CD14-positive monocyte (primary cell): ENCODE measurements at regions of chr9 and their contacts with region 1.

Region 1: DNA sequence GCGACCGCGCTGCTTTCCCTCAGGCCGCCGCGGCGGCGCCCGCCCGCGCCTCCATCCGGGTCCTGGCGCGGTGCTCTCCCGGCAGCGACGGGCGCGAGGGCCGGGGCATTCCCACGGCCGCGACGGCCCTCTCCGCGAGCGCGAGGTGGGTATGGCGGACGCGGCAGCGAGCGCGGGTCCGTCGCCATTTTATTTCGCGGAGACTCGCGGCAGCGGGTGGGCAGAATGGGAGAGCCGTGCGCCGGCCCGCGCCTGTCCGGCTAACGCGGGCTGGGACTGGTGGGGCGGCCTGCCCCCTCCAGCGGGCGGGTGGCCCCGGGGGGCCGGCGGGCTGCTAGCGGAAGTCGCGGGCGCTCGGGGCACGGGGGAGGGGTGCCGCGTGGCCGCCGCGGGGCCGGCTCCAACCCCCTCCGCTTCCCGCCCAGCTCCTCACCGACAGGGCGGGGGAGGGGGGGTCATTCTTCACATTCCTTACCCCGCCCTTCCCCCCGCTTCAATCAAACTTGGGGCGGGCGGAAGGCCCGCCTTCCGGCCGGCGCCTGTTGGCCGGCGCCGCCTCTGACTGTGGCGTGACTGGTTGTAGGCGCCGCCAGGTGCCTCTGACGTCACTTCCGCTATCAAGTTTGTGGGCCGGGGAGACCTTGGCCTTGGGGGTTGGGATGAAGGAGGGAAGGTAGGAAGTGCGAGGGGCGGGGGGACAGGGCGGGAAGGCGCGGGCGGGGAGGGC is 82.1 kb downstream of the PTPDC1 start:
- DNase-seq: peak; percentile 97
- H3K4me3 ChIP-seq: peak overlapping the region; percentile 88 to 99 (median 93)
- H3K4me3 Mint-ChIP-seq: peak overlapping the region; percentile 84 to 90
- H3K27ac ChIP-seq: peak overlapping the region; percentile 96 to 97
- H3K27ac Mint-ChIP-seq: peak overlapping the region; percentile 93 to 97 (median 95)
- H3K4me1 ChIP-seq: peaks cover 24 to 40% of the 10 kb centered on the region in 2 donors
- H3K4me1 Mint-ChIP-seq: peaks cover 39% of the 10 kb centered on the region
- H3K27me3 ChIP-seq: no peaks in the 10 kb centered on the region
- H3K27me3 Mint-ChIP-seq: peaks cover 0 to 3% (median 0%) of the 10 kb centered on the region in 3 donors
- CTCF ChIP-seq: no peak

Region 2: GRCh38 chr9:93119953-93120845 is 1046.2 kb before region 1 on chr9:
- intact Hi-C with region 1: loop called in 1 of 2 experiments (anchors 10 kb)
- DNase-seq: peak; percentile 99
- H3K4me3 ChIP-seq: peak overlapping the region in 1 of 3 experiments; percentile 49
- H3K4me3 Mint-ChIP-seq: peak overlapping the region; percentile 52 to 81
- H3K27ac ChIP-seq: peak overlapping the region; percentile 90 to 99
- H3K27ac Mint-ChIP-seq: peak overlapping the region; percentile 99 to 100 (median 100)
- H3K4me1 ChIP-seq: peaks cover 68 to 83% of the 10 kb centered on the region in 2 donors
- H3K4me1 Mint-ChIP-seq: peaks cover 65% of the 10 kb centered on the region
- H3K27me3 ChIP-seq: no peaks in the 10 kb centered on the region
- H3K27me3 Mint-ChIP-seq: peaks cover 0 to 2% (median 0%) of the 10 kb centered on the region in 3 donors
- CTCF ChIP-seq: peak; percentile 24

Region 3: DNA sequence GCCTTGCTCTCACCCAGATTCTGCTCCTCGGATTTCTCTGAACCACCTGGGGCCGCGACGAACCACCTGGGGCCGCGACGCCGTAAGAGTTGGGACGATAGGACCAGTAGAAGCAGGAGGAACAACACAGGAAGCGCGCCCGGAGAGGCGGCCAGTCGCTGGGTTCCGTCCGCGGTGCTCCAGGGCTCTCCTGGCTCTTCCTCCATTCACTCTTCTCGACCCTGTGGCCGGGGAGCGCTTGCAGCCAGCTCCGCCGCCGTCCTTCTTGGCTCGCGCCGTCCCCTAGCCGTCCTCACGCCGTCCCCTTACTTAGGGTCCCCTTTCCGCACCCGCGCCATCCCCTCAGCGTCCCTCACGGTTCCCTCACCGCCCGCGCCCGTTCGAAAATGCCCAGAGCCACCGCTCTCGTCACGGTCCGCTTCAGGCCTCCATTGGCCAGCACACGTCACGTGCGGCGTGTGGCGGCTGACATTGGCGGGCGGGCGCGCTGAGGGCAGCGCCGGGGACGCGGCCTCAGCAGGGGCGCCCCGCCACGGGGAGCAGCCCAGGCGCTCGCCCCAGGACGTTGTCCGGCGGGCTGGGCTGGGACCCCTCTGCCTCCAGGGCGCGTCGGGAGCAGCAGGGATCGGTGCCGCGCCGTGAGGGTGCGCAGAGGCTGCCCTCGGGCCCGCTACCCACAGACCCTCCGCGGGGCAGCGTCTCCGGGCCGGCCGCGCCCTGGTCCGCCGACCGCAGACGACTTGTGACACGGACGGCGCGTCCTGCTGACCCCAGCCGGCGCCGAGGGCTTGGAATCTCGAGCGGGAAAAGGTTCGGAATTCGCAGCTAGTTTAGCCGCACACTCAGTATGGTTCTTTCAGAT is 135.9 kb before region 1 on chr9:
- intact Hi-C with region 1: loop called in 1 of 2 experiments (anchors 5 kb)
- DNase-seq: peak; percentile 72 to 82 (median 77)
- H3K4me3 ChIP-seq: peak overlapping the region; percentile 78 to 93 (median 81)
- H3K4me3 Mint-ChIP-seq: peak overlapping the region; percentile 96 to 99
- H3K27ac ChIP-seq: peak overlapping the region; percentile 67 to 82
- H3K27ac Mint-ChIP-seq: peak overlapping the region; percentile 88 to 96 (median 90)
- H3K4me1 ChIP-seq: peaks cover 11 to 14% of the 10 kb centered on the region in 2 donors
- H3K4me1 Mint-ChIP-seq: peaks cover 16% of the 10 kb centered on the region
- H3K27me3 ChIP-seq: peaks cover 6 to 7% of the 10 kb centered on the region in 2 donors
- H3K27me3 Mint-ChIP-seq: peaks cover 4 to 14% (median 11%) of the 10 kb centered on the region in 3 donors
- CTCF ChIP-seq: no peak

Region 4: DNA sequence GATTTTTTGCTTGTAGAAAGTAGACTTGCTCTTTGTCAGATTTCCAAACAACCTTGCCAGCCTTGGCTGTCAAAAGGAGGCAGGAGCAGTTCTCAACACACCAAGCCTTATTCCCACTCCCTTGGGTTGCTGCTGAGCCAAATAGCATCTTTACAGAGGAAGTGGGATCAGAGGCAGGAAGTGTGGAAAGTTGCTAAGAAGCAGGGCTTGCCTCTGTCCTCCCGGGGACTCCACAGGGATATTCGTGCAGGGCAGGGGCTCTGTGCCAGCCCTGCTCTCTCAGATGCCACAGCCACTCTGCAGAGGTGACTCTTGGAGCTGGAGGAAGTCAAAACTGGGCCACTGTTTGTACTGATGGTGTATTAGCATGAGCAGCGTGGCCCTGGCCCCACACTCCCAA is 57.8 kb before region 1 on chr9:
- intact Hi-C with region 1: no loop called
- DNase-seq: no peak
- H3K4me3 ChIP-seq: no peak overlapping the region
- H3K4me3 Mint-ChIP-seq: no peak overlapping the region
- H3K27ac ChIP-seq: no peak overlapping the region
- H3K27ac Mint-ChIP-seq: no peak overlapping the region
- H3K4me1 ChIP-seq: no peaks in the 10 kb centered on the region
- H3K4me1 Mint-ChIP-seq: no peaks in the 10 kb centered on the region
- H3K27me3 ChIP-seq: no peaks in the 10 kb centered on the region
- H3K27me3 Mint-ChIP-seq: peaks cover 0 to 4% (median 0%) of the 10 kb centered on the region in 3 donors
- CTCF ChIP-seq: no peak

Region 5: GRCh38 chr9:94259077-94259892 is 92.9 kb after region 1 on chr9 and contains the start of gene ZNF169:
- intact Hi-C with region 1: loop called (anchors 5 to 10 kb)
- DNase-seq: peak; percentile 84 to 87 (median 85)
- H3K4me3 ChIP-seq: peak within 1 kb of the TSS; percentile 64 to 93 (median 89)
- H3K4me3 Mint-ChIP-seq: peak within 1 kb of the TSS; percentile 99 to 100
- H3K27ac ChIP-seq: peak within 1 kb of the TSS; percentile 61 to 93
- H3K27ac Mint-ChIP-seq: peak within 1 kb of the TSS; percentile 95 to 100 (median 97)
- H3K4me1 ChIP-seq: peaks cover 11 to 17% of the 10 kb centered on the region in 2 donors
- H3K4me1 Mint-ChIP-seq: peaks cover 25% of the 10 kb centered on the region
- H3K27me3 ChIP-seq: peaks cover 2 to 3% of the 10 kb centered on the region in 2 donors
- H3K27me3 Mint-ChIP-seq: peaks cover 7 to 16% (median 9%) of the 10 kb centered on the region in 3 donors
- CTCF ChIP-seq: no peak
- polyA plus RNA-seq, gene ZNF169: 0.90 to 16.5 (median 1.1) TPM